K562 (cell line): ENCODE measurements at regions of chr9 and their contacts with region 1.

Region 1: DNA sequence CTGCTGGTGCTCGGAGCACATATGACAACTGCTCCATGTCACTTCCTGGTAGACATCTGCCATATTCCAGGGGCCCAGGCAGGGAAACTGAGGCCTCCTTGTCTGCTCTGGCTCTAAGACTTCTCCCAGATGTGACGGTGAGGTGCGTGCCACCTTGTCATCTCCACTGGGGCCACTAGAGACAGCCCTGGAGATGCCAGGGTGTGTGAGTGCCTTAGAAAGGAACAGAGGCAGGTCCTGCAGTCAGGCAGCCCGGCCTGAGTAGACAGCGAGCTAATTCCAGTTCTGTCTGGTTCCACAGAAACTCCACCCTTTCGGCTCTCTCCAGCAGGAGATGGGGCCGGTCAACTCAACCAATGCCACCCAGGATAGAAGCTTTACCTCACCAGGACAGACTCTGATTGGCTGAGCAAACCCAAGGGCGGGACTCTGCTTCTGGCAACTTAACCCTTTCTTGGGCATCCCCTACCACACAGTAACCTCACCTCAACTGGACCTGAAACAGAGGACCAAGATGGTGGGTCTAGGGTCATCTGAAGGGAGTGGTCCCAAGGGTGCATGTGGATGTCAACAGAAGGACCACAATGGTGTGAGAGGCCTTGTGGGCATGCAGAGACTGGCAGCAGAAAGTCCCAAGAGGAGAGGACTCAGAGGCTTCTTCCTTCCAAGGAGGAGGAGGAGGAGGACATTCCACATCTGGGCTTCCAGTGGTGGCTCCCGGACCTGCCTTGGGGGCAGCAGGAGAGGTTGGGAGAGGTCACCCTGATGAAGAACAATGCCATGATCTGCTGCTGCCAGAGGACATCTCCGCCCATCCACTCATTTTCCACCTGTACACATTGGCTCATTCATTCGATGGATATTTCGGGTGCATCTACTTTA is 77.7 kb downstream of the RGS3 start:
- DNase-seq: peak; percentile 85 to 90 (median 88)
- ATAC-seq: peak; percentile 96
- H3K4me3 ChIP-seq: no peak overlapping the region
- H3K27ac ChIP-seq: peak overlapping the region; percentile 69
- H3K4me1 ChIP-seq: peaks cover 22 to 28% of the 10 kb centered on the region in 2 experiments; a peak in 4 of 5 replicates
- H3K27me3 ChIP-seq: no peaks in the 10 kb centered on the region
- CTCF ChIP-seq: no peak
- EP300 ChIP-seq: no peak
- POLR2A ChIP-seq: peak; percentile 79
- RAD21 ChIP-seq: no peak

Region 2: DNA sequence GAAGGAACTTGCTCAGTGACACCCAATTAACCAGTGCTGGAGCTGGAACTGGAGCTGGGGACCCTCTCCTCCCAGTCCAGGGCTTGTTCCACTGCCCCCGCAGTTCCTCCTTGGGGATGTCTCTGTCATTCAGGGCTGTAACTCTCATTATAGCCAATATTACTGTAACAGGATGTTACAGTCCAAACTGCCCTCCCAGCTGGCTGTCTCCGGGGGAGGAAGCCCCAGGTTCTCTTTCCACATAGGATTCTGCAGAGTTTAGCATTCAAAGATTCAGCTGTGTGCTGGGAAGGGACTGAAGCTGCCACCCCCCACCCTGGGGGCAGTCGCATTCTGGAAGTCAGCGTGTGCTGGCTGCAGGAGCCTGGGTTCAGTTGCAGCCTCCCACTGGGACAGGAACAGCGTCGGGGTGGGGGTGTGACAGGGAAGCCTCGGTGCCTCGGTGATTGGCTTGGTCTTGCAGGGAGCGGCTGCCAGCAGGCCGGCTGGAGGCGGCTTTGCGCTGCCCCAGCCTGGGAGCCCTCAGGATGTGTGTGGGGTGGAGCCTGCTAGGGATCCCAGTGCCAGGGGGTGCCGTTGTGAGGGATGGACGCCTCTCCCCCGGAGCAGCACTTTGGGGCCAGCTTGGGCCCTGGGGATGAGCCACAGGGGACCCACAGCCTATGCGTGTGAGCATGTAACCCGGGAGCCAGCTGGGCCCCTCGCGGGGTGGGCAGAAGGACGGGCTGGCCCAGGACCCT is 23.4 kb after region 1 on chr9:
- CTCF ChIA-PET with region 1: no interaction called
- POLR2A ChIA-PET with region 1: interaction called, 3 read pairs
- in situ Hi-C with region 1: no loop called
- intact Hi-C with region 1: loop called (anchors 2 kb)
- DNase-seq: peak in 2 of 4 experiments; percentile 26 to 29
- ATAC-seq: peak; percentile 74
- H3K4me3 ChIP-seq: peak overlapping the region; percentile 37; the same call in 1 of the 2 replicates
- H3K27ac ChIP-seq: no peak overlapping the region
- H3K4me1 ChIP-seq: peaks cover 11% of the 10 kb centered on the region in 2 experiments
- H3K27me3 ChIP-seq: peaks cover 0 to 36% of the 10 kb centered on the region in 2 experiments; a peak in 3 of 5 replicates
- CTCF ChIP-seq: no peak
- EP300 ChIP-seq: no peak
- POLR2A ChIP-seq: no peak
- RAD21 ChIP-seq: no peak